ENCODE measurements at regions of chr14 and their contacts with region 1.

Region 1: GRCh38 chr14:24442273-24443052 is at the start of gene SDR39U1:
- DNase-seq: peak; percentile 99
- H3K4me3 Mint-ChIP-seq: peak within 1 kb of the TSS; percentile 89
- H3K27ac Mint-ChIP-seq: peak within 1 kb of the TSS; percentile 98
- H3K4me1 Mint-ChIP-seq: peaks cover 39% of the 10 kb centered on the region
- H3K27me3 Mint-ChIP-seq: no peaks in the 10 kb centered on the region
- total RNA-seq, gene SDR39U1: 70.5 to 72.4 TPM

Region 2: GRCh38 chr14:24051789-24052655 is 390.4 kb before region 1 on chr14 and contains the start of gene CARMIL3:
- CTCF ChIA-PET with region 1: no interaction called
- intact Hi-C with region 1: loop called (anchors 5 kb)
- DNase-seq: peak; percentile 60
- H3K4me3 Mint-ChIP-seq: peak within 1 kb of the TSS; percentile 65
- H3K27ac Mint-ChIP-seq: peak within 1 kb of the TSS; percentile 28
- H3K4me1 Mint-ChIP-seq: peaks cover 18% of the 10 kb centered on the region
- H3K27me3 Mint-ChIP-seq: peaks cover 2% of the 10 kb centered on the region
- total RNA-seq, gene CARMIL3: 0.48 to 0.99 TPM

Region 3: DNA sequence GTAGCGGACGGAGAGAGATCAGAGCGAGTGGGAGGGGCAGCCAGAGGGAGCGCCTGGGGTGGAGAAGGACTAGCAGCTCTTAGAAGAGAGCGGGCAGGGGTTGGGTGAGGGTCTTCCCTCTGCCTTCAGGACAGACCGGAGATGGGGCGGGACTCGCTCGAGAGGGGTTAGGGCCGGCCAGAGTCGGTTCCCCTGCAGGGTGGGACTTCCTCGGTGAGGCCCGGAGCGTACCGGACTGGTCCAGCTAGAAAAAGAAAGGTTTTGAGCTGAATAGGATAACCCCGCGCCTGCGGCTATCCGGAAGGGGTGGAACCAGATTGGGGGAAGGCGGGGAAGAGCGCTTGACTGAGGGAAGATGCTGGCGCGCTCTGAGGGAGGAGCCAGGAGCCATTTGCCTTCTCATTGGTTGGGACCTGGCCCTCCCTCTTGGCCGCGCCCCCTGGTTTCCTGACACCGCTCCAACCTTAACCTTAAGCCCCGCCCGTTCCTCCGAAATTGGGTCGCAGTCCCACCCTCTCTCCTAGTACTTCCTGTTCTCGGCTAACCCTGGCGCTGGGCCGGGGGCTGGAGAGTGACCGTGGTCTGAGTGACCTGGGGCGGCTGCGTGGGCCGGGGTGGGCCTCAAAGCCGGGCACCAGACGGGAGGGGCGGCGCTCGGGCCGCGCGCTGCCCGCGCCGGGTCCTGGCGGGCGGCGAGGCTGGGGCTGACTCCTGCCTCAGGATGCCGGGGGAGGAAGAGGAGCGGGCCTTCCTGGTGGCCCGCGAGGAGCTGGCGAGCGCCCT is 295.3 kb before region 1 on chr14 and contains the start of gene RNF31:
- CTCF ChIA-PET with region 1: no interaction called
- intact Hi-C with region 1: loop called (anchors 1 kb)
- DNase-seq: peak; percentile 99
- H3K4me3 Mint-ChIP-seq: peak within 1 kb of the TSS; percentile 97
- H3K27ac Mint-ChIP-seq: peak within 1 kb of the TSS; percentile 99
- H3K4me1 Mint-ChIP-seq: peaks cover 54% of the 10 kb centered on the region
- H3K27me3 Mint-ChIP-seq: no peaks in the 10 kb centered on the region
- total RNA-seq, gene RNF31: 51.1 to 53.8 TPM

Region 4: GRCh38 chr14:24232121-24232644 is 210.3 kb before region 1 on chr14 and contains the start of gene NEDD8:
- CTCF ChIA-PET with region 1: no interaction called
- intact Hi-C with region 1: loop called (anchors 1 kb)
- DNase-seq: peak; percentile 96
- H3K4me3 Mint-ChIP-seq: peak within 1 kb of the TSS; percentile 98
- H3K27ac Mint-ChIP-seq: peak within 1 kb of the TSS; percentile 97
- H3K4me1 Mint-ChIP-seq: peaks cover 52% of the 10 kb centered on the region
- H3K27me3 Mint-ChIP-seq: no peaks in the 10 kb centered on the region
- total RNA-seq, gene NEDD8: 172 to 196 TPM

Region 5: DNA sequence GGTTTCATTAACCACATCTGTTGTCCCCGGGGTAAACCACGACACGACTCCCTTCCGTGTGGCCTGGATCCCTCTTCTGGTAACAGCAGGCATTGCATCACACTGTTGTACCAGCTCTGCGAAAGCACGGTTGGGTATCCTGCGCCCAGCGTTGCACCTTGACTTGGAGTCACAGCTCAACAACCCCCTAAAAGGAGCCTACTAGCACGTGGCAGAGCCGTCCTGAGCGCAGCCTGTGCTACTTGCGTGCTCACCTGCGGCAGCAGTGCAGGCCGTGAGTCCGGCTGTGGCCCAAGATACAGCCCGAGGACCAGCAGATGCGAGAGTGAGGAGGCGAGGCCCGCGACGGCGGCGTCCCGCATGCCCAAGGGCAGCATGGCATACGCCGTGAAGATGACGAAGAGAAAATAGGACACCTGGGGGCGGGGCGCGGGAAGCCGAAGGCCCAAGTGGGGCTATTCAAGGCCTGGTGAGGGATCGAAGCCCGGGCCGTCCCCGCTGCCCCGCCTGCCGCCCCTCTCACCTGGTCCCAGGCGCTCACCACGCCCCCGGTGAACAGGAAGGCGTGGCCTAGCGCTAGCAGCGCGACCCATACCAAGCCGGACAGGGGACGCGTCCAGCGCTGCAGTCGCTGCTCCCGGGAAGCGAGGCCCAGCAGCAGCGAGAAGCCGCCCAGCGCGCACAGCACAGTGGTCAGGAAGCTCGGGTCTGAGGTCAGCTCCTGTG is 110.0 kb before region 1 on chr14:
- CTCF ChIA-PET with region 1: interaction called, 617 read pairs
- intact Hi-C with region 1: no loop called
- DNase-seq: peak; percentile 91
- H3K4me3 Mint-ChIP-seq: peak overlapping the region; percentile 71
- H3K27ac Mint-ChIP-seq: no peak overlapping the region
- H3K4me1 Mint-ChIP-seq: peaks cover 28% of the 10 kb centered on the region
- H3K27me3 Mint-ChIP-seq: peaks cover 24% of the 10 kb centered on the region

Region 6: DNA sequence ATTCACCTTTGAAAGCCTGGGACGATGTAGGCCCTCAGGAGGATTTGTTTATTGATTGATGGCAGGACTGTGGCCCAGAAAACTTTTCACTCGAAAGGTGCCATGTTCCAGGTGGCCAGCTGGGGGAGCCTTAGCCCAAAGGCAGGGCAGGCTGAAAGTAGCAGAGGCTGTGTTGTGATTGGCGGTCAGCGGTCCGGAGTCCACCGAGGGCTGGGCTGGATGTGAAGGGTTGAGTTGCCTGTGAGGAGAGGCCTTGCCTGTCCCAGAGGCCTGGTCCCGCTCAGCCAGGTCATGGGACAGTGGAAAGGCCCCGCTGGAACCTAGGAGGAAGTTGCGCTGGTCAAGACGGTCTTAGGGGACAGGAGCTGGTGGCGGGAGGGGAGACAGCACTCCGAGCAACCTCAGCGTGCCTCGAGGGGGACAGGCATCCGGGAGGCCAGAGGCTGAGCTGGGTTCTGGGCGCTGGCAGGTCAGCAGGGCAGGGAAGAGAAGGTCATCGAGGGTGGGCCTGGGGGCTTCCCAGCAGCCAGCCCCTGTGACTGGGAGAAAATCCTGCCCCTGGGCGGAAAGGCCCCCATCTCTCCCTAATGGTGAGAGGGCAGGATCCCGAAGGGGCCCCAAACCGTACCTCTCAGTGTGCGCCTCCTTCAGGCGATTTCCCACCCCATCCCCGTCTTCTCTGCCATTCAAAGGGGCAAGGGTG is 39.3 kb after region 1 on chr14:
- CTCF ChIA-PET with region 1: no interaction called
- intact Hi-C with region 1: loop called (anchors 2 kb)
- DNase-seq: peak; percentile 80
- H3K4me3 Mint-ChIP-seq: peak overlapping the region; percentile 68
- H3K27ac Mint-ChIP-seq: peak overlapping the region; percentile 22
- H3K4me1 Mint-ChIP-seq: peaks cover 23% of the 10 kb centered on the region
- H3K27me3 Mint-ChIP-seq: no peaks in the 10 kb centered on the region

Region 7: GRCh38 chr14:24817212-24818057 is 375.0 kb after region 1 on chr14:
- CTCF ChIA-PET with region 1: no interaction called
- intact Hi-C with region 1: no loop called
- DNase-seq: no peak
- H3K4me3 Mint-ChIP-seq: no peak overlapping the region
- H3K27ac Mint-ChIP-seq: no peak overlapping the region
- H3K4me1 Mint-ChIP-seq: no peaks in the 10 kb centered on the region
- H3K27me3 Mint-ChIP-seq: peaks cover 6% of the 10 kb centered on the region